ENCODE measurements at regions of chr1 and their contacts with region 1.

Region 1: GRCh38 chr1:94926915-94927404 is at the start of gene CNN3:
- DNase-seq: no peak
- H3K4me3 ChIP-seq: peak within 1 kb of the TSS; percentile 73 to 81 (median 76)
- H3K27ac ChIP-seq: peak within 1 kb of the TSS; percentile 92 to 96 (median 94)
- H3K4me1 ChIP-seq: peaks cover 5 to 74% (median 17%) of the 10 kb centered on the region in 3 donors
- H3K27me3 ChIP-seq: peaks cover 0 to 16% (median 0%) of the 10 kb centered on the region in 4 donors
- CTCF ChIP-seq: peak in 2 of 6 experiments; percentile 5 to 6
- POLR2A ChIP-seq: peak in 3 of 4 donors; percentile 41 to 96 (median 96)
- total RNA-seq, gene CNN3: 106 to 205 (median 149) TPM

Region 2: DNA sequence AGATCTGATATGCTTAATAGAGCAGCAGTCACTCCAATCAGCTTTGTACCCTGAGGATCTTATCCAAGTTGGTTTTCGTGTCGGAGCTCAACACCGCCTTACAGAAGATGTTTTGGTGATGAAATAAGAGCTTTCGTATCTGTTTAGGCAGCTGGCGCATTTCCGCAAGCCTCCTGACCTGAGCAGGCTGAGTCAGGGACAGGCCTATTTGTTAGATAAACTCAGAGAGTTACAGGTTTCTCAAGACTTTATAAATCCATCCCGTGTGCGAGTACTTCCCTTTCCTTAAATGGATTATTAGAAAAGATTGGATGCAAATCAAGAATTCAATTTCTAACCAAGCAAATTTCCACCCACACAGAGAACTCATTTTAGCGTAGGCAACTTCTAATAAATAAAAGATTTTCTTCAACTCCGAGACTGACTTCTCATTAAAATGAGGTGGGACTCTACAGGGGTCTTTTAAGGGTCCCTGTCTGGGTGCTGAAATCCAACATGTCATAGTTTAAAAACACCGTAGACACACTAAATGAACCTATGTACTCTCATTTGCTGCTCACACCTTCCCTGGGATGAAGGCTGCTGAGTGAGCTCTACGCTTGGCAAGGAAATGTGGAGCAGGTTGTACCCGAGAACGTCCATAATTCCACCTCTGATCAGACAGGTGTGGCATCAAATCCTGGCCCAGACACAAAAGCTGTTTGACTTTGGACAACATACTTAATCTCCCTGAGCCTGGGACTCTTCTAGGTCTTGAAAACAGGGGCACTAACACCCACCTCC is 278.5 kb before region 1 on chr1:
- intact Hi-C with region 1: no loop called
- DNase-seq: no peak
- H3K4me3 ChIP-seq: peak overlapping the region in 1 of 4 donors; percentile 22
- H3K27ac ChIP-seq: peak overlapping the region; percentile 61 to 87 (median 76)
- H3K4me1 ChIP-seq: peaks cover 0 to 18% (median 7%) of the 10 kb centered on the region in 3 donors
- H3K27me3 ChIP-seq: no peaks in the 10 kb centered on the region
- CTCF ChIP-seq: no peak
- POLR2A ChIP-seq: no peak

Region 3: GRCh38 chr1:94854458-94855306 is 72.3 kb before region 1 on chr1:
- intact Hi-C with region 1: loop called (anchors 10 kb)
- DNase-seq: peak; percentile 45
- H3K4me3 ChIP-seq: peak overlapping the region; percentile 24 to 68 (median 46)
- H3K27ac ChIP-seq: peak overlapping the region; percentile 79 to 90 (median 87)
- H3K4me1 ChIP-seq: peaks cover 6 to 36% (median 9%) of the 10 kb centered on the region in 3 donors
- H3K27me3 ChIP-seq: no peaks in the 10 kb centered on the region
- CTCF ChIP-seq: peak; percentile 85 to 98 (median 93)
- POLR2A ChIP-seq: no peak

Region 4: GRCh38 chr1:95035536-95035935 is 108.6 kb after region 1 on chr1:
- intact Hi-C with region 1: loop called (anchors 10 kb)
- DNase-seq: no peak
- H3K4me3 ChIP-seq: no peak overlapping the region
- H3K27ac ChIP-seq: no peak overlapping the region
- H3K4me1 ChIP-seq: peaks cover 0 to 18% (median 0%) of the 10 kb centered on the region in 3 donors
- H3K27me3 ChIP-seq: no peaks in the 10 kb centered on the region
- CTCF ChIP-seq: no peak
- POLR2A ChIP-seq: no peak